PC-3 (cell line): ENCODE measurements at regions of chr3 and their contacts with region 1.

Region 1: GRCh38 chr3:112773864-112774590 is 72.6 kb downstream of the CD200R1L start:
- DNase-seq: peak; percentile 97
- ATAC-seq: peak; percentile 72
- H3K4me3 ChIP-seq: 0 out of 2 replicates have a peak overlapping the region, but pooled peaks have one; percentile 5
- H3K27ac ChIP-seq: peak overlapping the region; percentile 93
- H3K4me1 ChIP-seq: peaks cover 65% of the 10 kb centered on the region
- H3K27me3 ChIP-seq: no peaks in the 10 kb centered on the region
- CTCF ChIP-seq: no peak

Region 2: DNA sequence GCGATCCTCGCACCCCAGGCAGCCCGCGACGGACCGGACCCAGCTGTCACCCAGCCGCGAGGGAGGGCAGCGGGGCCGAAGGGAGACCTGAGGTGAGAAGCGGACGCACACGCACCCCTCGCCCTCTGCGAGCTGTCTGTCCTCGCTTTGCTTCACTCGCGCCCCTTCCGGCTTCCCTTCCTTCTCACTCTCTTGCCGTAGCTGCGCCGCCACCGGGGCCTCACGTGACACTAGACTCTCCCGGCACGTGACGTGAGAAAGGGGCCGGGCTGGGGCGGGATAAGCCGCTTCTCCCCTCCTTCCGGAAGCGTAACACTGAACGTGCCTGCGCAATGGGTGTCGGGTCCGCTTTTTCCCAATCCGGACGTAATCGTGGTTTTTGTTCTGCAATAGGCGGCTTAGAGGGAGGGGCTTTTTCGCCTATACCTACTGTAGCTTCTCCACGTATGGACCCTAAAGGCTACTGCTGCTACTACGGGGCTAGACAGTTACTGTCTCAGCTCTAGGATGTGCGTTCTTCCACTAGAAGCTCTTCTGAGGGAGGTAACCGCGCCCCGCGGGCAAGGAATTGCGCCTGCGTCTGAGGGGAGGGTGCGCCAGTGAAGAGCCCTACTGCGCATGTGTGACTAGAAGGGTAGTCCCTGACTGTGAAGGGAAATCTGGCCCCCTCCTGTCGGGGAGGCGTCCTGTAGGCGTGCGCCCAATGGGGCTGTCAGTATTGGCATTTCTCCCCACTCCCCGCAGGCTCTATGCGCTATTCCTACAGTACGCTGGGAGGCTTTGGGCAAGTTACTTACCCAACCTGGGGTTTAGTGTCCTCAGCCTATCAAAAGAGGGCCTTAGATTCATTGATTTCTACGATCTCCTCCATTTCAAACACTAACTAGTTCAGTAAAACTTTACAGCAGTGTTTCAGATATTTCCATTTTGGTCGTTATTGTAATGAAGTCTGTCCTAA is 212.0 kb before region 1 on chr3 and contains the starts of genes ATG3 and SLC35A5:
- CTCF ChIA-PET with region 1: no interaction called
- POLR2A ChIA-PET with region 1: no interaction called
- intact Hi-C with region 1: loop called (anchors 5 kb)
- DNase-seq: peak; percentile 98
- ATAC-seq: peak; percentile 83
- H3K4me3 ChIP-seq: peak within 1 kb of the TSS; percentile 96
- H3K27ac ChIP-seq: peak within 1 kb of the TSS; percentile 92
- H3K4me1 ChIP-seq: peaks cover 21% of the 10 kb centered on the region
- H3K27me3 ChIP-seq: no peaks in the 10 kb centered on the region
- CTCF ChIP-seq: no peak
- total RNA-seq, gene ATG3: 117 and 120 TPM in 2 replicates
- total RNA-seq, gene SLC35A5: 16.0 and 17.7 TPM in 2 replicates

Region 3: DNA sequence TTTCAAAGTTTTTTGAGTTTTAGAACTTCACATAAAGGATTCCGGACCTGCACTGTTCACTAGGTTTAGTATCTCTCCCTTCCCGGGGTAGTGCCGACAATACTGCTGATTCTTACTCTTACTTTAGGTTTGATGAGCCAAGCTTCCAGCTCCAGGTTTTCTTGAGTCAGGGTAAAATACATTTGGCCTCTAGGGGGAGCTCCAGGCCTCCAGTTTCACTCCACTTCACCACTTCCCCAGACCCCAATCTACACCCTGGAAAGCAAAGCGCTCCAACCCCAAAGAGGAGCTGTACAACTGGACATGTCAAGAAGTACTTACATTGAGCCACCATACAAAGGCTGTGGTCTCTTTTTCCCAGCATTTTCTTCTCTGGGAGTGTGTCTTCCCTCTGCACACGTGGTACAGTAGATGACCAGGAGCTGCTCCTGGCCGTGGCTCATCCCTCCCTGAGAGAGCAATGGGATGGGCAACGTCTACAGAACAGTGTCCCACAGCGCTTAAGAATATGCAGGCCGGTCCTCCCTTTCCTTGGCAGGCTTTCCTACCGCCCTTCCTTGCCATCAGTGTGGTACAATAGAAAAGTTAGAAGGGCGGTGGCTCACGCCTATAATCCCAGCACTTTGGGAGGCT is 39.2 kb before region 1 on chr3:
- CTCF ChIA-PET with region 1: interaction called, 8 read pairs
- POLR2A ChIA-PET with region 1: interaction called, 4 read pairs
- intact Hi-C with region 1: loop called (anchors 2 kb)
- DNase-seq: peak; percentile 89
- ATAC-seq: peak; percentile 71
- H3K4me3 ChIP-seq: no peak overlapping the region
- H3K27ac ChIP-seq: no peak overlapping the region
- H3K4me1 ChIP-seq: peaks cover 33% of the 10 kb centered on the region
- H3K27me3 ChIP-seq: no peaks in the 10 kb centered on the region
- CTCF ChIP-seq: peak; percentile 92

Region 4: GRCh38 chr3:112794622-112795172 is 20.7 kb after region 1 on chr3:
- CTCF ChIA-PET with region 1: interaction called, 18 read pairs
- POLR2A ChIA-PET with region 1: no interaction called
- intact Hi-C with region 1: loop called (anchors 1 kb)
- DNase-seq: no peak
- ATAC-seq: no peak
- H3K4me3 ChIP-seq: no peak overlapping the region
- H3K27ac ChIP-seq: no peak overlapping the region
- H3K4me1 ChIP-seq: peaks cover 28% of the 10 kb centered on the region
- H3K27me3 ChIP-seq: no peaks in the 10 kb centered on the region
- CTCF ChIP-seq: no peak

Region 5: GRCh38 chr3:112814266-112814665 is 40.2 kb after region 1 on chr3:
- CTCF ChIA-PET with region 1: interaction called, 13 read pairs
- POLR2A ChIA-PET with region 1: no interaction called
- intact Hi-C with region 1: loop called (anchors 1 kb)
- DNase-seq: peak; percentile 77
- ATAC-seq: peak; percentile 78
- H3K4me3 ChIP-seq: no peak overlapping the region
- H3K27ac ChIP-seq: no peak overlapping the region
- H3K4me1 ChIP-seq: peaks cover 19% of the 10 kb centered on the region
- H3K27me3 ChIP-seq: no peaks in the 10 kb centered on the region
- CTCF ChIP-seq: peak; percentile 81

Region 6: GRCh38 chr3:112822069-112823055 is 48.3 kb after region 1 on chr3:
- CTCF ChIA-PET with region 1: interaction called, 4 read pairs
- POLR2A ChIA-PET with region 1: no interaction called
- intact Hi-C with region 1: loop called (anchors 2 kb)
- DNase-seq: peak; percentile 59
- ATAC-seq: peak; percentile 48
- H3K4me3 ChIP-seq: peak overlapping the region; percentile 6; the same call in 1 of the 2 replicates
- H3K27ac ChIP-seq: no peak overlapping the region
- H3K4me1 ChIP-seq: peaks cover 37% of the 10 kb centered on the region
- H3K27me3 ChIP-seq: no peaks in the 10 kb centered on the region
- CTCF ChIP-seq: no peak